Activated CD4-positive, alpha-beta memory T cell treated with anti-CD3 and anti-CD28 coated beads for 36 hours (primary cell): ENCODE measurements at regions of chr6 and their contacts with region 1.

Region 1: DNA sequence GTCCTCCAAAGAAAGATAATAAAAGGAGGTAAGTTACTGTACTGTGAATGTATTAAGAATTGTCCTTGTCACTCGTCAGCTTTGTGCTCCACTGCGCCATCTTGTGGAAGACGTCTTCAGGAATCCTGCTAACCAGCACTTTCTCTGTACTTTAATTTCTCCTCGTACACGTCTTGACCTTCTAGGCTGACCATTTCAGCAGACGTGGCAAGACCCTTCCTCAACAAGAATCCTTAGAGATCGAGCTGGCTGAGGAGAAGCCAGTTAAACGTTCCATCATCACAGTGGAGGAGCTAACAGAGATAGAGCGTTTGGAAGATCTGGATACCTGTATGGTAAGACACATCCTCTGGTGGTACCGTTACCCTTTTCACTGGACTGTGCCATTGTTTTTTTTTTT is 95.5 kb upstream of the SCGN start:
- DNase-seq: peak; percentile 84
- H3K4me3 Mint-ChIP-seq: no peak overlapping the region
- H3K27ac Mint-ChIP-seq: no peak overlapping the region
- H3K4me1 Mint-ChIP-seq: peaks cover 2% of the 10 kb centered on the region
- H3K27me3 Mint-ChIP-seq: no peaks in the 10 kb centered on the region

Region 2: GRCh38 chr6:25223490-25223991 is 333.0 kb before region 1 on chr6:
- CTCF ChIA-PET with region 1: interaction called, 50 read pairs
- POLR2A ChIA-PET with region 1: no interaction called
- intact Hi-C with region 1: loop called (anchors 1 kb)
- DNase-seq: peak; percentile 72
- H3K4me3 Mint-ChIP-seq: peak overlapping the region; percentile 58
- H3K27ac Mint-ChIP-seq: no peak overlapping the region
- H3K4me1 Mint-ChIP-seq: peaks cover 12% of the 10 kb centered on the region
- H3K27me3 Mint-ChIP-seq: peaks cover 2% of the 10 kb centered on the region

Region 3: DNA sequence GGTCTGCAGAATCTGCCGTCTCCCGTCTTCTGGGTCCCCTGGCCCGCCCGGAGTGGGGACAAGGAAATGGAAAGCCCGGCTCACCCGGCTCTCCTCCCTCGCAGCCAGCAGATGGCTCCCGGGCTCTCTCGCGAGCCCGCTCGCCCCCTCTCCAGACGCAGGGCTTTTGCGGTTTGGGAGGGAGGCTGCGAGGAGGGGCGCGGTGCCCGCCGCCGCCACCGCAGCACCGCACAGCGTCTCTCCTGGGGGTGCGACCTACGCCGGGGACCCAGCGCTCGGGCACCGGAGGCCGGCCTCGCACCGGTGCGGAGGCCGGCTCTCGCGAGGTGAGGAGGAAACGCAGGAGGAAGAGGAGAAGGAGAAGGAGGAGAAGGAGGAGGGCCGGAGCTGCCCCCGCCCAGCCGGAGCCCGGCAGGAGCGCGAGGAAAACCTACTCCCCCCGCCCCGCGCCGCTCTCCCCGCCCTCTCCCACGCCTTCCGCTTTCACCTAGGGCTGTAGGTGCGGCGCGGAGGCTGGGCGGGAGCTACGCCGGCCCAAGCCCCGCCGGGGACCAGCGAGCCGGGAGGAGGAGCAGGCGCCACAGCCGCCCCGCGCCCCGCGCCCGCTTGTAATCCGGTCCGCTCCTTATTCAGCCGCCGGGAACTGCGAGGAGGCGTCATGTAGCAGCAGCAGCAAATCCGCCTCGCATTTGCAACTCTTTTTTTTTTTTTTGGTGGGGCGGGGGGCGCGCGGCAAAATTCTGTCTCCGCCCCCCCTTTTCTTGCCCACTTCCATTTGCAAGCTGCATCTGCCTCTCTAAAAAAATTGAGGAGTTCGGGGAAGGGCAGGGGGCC is 277.4 kb before region 1 on chr6 and contains the start of gene CARMIL1:
- CTCF ChIA-PET with region 1: interaction called, 13 read pairs
- POLR2A ChIA-PET with region 1: no interaction called
- intact Hi-C with region 1: no loop called
- DNase-seq: peak; percentile 77
- H3K4me3 Mint-ChIP-seq: peak within 1 kb of the TSS; percentile 81
- H3K27ac Mint-ChIP-seq: peak within 1 kb of the TSS; percentile 44
- H3K4me1 Mint-ChIP-seq: peaks cover 28% of the 10 kb centered on the region
- H3K27me3 Mint-ChIP-seq: no peaks in the 10 kb centered on the region
- total RNA-seq, gene CARMIL1: 2.4 to 2.7 TPM

Region 4: GRCh38 chr6:25601800-25602673 is 45.5 kb after region 1 on chr6:
- CTCF ChIA-PET with region 1: interaction called, 5 read pairs
- POLR2A ChIA-PET with region 1: no interaction called
- intact Hi-C with region 1: loop called (anchors 2 kb)
- DNase-seq: no peak
- H3K4me3 Mint-ChIP-seq: no peak overlapping the region
- H3K27ac Mint-ChIP-seq: no peak overlapping the region
- H3K4me1 Mint-ChIP-seq: no peaks in the 10 kb centered on the region
- H3K27me3 Mint-ChIP-seq: no peaks in the 10 kb centered on the region

Region 5: GRCh38 chr6:25652007-25652515 is 95.5 kb after region 1 on chr6 and contains the start of gene SCGN:
- CTCF ChIA-PET with region 1: no interaction called
- POLR2A ChIA-PET with region 1: no interaction called
- intact Hi-C with region 1: no loop called
- DNase-seq: peak; percentile 69
- H3K4me3 Mint-ChIP-seq: no peak within 1 kb of the TSS
- H3K27ac Mint-ChIP-seq: no peak within 1 kb of the TSS
- H3K4me1 Mint-ChIP-seq: peaks cover 2% of the 10 kb centered on the region
- H3K27me3 Mint-ChIP-seq: peaks cover 43% of the 10 kb centered on the region
- total RNA-seq, gene SCGN: not detected